ENCODE measurements at regions of chrX and their contacts with region 1.

Region 1: GRCh38 chrX:31658360-31658759 is 586.5 kb upstream of the FTHL17 start:
- H3K4me3 ChIP-seq: no peak overlapping the region
- H3K27ac ChIP-seq: no peak overlapping the region
- H3K4me1 ChIP-seq: peaks cover 5% of the 10 kb centered on the region
- CTCF ChIP-seq: no peak

Region 2: DNA sequence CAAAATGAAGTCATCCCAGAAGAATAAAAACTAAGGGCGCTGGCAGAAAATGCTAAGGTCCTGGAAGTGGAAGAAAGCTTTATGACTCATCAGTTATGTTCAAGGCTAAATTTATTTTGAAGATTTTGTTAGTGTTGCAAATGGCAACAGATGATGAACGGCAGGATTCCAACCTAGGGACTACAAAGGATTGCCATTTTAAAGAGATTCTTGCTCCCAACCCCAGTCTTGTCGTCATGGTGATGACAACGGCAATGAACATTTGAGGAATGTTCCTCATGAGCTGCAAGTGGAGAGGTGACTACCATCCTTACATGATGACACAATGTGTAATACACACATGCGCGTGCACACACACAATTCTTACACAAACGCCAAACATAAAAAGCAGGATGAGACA is 532.2 kb before region 1 on chrX:
- CTCF ChIA-PET with region 1: no interaction called
- POLR2A ChIA-PET with region 1: no interaction called
- H3K4me3 ChIP-seq: no peak overlapping the region
- H3K27ac ChIP-seq: no peak overlapping the region
- H3K4me1 ChIP-seq: peaks cover 5% of the 10 kb centered on the region
- CTCF ChIP-seq: no peak

Region 3: GRCh38 chrX:31213941-31214340 is 444.4 kb before region 1 on chrX:
- CTCF ChIA-PET with region 1: interaction called, 26 read pairs
- POLR2A ChIA-PET with region 1: no interaction called
- H3K4me3 ChIP-seq: no peak overlapping the region
- H3K27ac ChIP-seq: no peak overlapping the region
- H3K4me1 ChIP-seq: peaks cover 5% of the 10 kb centered on the region; the same call in 1 of the 2 replicates
- CTCF ChIP-seq: no peak

Region 4: GRCh38 chrX:31279359-31279758 is 379.0 kb before region 1 on chrX:
- CTCF ChIA-PET with region 1: interaction called, 15 read pairs
- POLR2A ChIA-PET with region 1: no interaction called
- H3K4me3 ChIP-seq: no peak overlapping the region
- H3K27ac ChIP-seq: no peak overlapping the region
- H3K4me1 ChIP-seq: no peaks in the 10 kb centered on the region
- CTCF ChIP-seq: no peak

Measured in HEK293 (cell line).